Mucosa of descending colon (tissue), 3 donors: ENCODE measurements at regions of chr2 and their contacts with region 1.

Region 1: GRCh38 chr2:68141875-68142274 is 15.8 kb upstream of the PNO1 start:
- DNase-seq: no peak
- ATAC-seq: no peak
- H3K4me3 ChIP-seq: no peak overlapping the region
- H3K4me1 ChIP-seq: no peaks in the 10 kb centered on the region
- CTCF ChIP-seq: no peak

Region 2: DNA sequence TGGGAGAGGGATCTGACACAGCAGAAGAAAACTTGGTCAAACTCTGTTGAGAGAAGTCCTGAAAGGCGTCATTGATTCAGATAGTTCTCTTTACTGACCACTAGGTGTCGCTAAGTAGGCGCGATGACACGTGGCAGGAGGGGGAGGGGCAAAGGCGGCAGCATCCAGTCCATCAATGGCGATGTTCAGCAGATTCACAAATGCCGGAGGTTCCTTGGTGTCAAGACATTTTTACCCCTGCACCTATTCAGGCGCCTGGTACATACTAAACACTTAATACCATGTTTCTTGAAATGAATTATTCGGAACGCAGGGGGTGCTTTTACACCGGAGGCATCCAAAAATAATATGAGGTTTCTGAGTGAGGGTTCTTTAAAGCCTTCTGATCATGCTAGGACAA is 220.2 kb after region 1 on chr2:
- intact Hi-C with region 1: loop called in 1 of 2 experiments (anchors 5 kb)
- DNase-seq: peak; percentile 71 to 86 (median 86)
- ATAC-seq: peak; percentile 94
- H3K4me3 ChIP-seq: no peak overlapping the region
- H3K4me1 ChIP-seq: no peaks in the 10 kb centered on the region
- CTCF ChIP-seq: peak; percentile 62